GM10248 (cell line): ENCODE measurements at regions of chr7 and their contacts with region 1.

Region 1: GRCh38 chr7:98745722-98746318 is 124.0 kb downstream of the TMEM130 start:
- DNase-seq: peak; percentile 77
- CTCF ChIP-seq: peak; percentile 84

Region 2: GRCh38 chr7:98420966-98421612 is 324.7 kb before region 1 on chr7:
- CTCF ChIA-PET with region 1: interaction called, 34 read pairs
- POLR2A ChIA-PET with region 1: no interaction called
- DNase-seq: peak; percentile 82
- CTCF ChIP-seq: peak; percentile 95

Region 3: DNA sequence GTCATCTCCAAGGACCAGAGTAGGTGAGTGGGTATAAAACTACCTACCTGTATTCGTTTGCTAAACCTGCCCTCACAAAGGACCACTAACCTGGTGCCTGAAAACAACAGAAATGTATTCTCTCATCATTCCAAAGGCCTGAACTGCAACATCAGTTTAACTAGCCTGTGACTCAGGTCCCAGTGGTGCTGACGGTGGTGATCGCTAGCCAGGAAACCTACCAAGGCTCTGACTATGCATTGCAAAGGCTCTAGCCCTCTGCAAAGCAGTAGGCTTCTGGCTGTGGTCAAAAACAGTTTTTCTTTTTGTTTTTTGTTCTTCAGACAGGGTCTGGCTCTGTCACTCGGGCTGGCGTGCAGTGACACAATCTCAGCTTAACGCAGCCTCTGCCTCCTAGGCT is 21.2 kb before region 1 on chr7:
- CTCF ChIA-PET with region 1: interaction called, 10 read pairs
- POLR2A ChIA-PET with region 1: no interaction called
- DNase-seq: no peak
- CTCF ChIP-seq: no peak

Region 4: GRCh38 chr7:98831641-98832221 is 85.9 kb after region 1 on chr7:
- CTCF ChIA-PET with region 1: interaction called, 13 read pairs
- POLR2A ChIA-PET with region 1: no interaction called
- DNase-seq: no peak
- CTCF ChIP-seq: peak; percentile 32

Region 5: DNA sequence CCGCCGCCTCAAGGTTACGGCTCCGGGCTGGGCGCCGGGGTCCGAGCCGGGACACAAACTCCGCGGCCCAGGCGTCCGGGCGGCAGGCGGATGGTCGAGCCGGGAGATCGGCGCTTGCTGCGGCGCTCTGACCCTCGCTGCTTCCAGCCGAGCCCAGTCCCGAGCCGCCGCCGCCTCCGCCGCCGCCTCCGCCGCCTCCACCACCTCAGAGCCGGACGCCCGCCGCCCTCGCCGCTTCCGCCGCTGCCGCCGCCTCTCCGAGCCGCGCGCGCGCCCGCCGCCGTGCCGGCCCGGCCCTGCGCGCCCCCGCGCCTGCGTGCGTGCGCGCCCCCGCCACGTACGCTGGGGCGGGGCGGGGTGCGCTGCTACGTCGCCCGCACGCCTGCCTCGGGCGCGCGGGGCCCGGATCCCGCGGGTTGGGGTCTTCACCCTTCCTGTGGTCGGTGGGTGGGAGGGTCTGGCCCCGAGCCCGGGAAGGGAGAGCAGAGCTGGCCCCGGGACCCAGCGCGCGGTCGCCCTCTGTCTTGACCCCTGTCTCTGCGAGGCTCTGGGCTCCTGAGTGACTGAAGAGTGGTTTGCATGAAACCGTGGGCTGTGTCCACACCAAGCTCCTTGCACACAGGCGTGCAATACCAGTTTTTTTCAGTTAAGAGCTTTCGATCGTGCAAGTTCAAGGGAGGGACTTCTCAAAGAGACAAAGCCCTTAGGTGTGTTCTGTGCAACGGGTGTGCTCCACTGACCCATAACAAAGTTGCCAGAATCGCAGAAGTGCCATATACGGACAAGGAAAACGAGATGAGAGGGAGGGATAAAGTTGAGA is 398.2 kb after region 1 on chr7 and contains the start of gene SMURF1:
- CTCF ChIA-PET with region 1: no interaction called
- POLR2A ChIA-PET with region 1: no interaction called
- DNase-seq: peak; percentile 84
- CTCF ChIP-seq: no peak